GM12878 (cell line): ENCODE measurements at regions of chr4 and their contacts with region 1.

Region 1: GRCh38 chr4:176002007-176002613 is 63.5 kb upstream of the WDR17 start:
- DNase-seq: no peak
- ATAC-seq: peak; percentile 88
- H3K4me3 ChIP-seq: peak overlapping the region; percentile 63; the same call in 1 of the 2 replicates
- H3K27ac ChIP-seq: no peak overlapping the region
- H3K4me1 ChIP-seq: no peaks in the 10 kb centered on the region
- H3K27me3 ChIP-seq: peaks cover 2 to 11% of the 10 kb centered on the region in 2 experiments; a peak in 2 of 4 replicates
- CTCF ChIP-seq: no peak
- EP300 ChIP-seq: no peak
- POLR2A ChIP-seq: no peak
- RAD21 ChIP-seq: no peak

Region 2: DNA sequence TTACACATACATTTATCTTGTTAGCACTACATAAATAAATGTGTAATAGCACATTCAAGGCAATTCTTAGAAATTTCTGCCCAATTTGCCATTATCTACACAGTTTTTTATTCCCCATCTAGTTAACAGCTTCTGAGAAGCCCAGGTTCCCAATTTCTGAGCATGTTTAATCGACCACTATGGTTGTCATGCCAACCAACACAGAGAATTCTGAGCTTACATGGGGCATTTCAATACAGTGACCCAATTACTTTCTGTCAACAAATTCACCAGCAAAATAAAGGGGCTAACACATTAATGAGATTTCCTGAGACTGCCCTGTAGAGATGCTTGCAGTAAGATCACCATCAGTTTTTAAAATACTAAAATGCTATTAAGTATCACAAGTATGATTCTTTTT is 212.0 kb before region 1 on chr4:
- CTCF ChIA-PET with region 1: no interaction called
- POLR2A ChIA-PET with region 1: no interaction called
- RAD21 ChIA-PET with region 1: no interaction called
- SMC1A ChIA-PET with region 1: no interaction called
- in situ Hi-C with region 1: no loop called
- intact Hi-C with region 1: no loop called
- DNase-seq: no peak
- ATAC-seq: no peak
- H3K4me3 ChIP-seq: no peak overlapping the region
- H3K27ac ChIP-seq: no peak overlapping the region
- H3K4me1 ChIP-seq: no peaks in the 10 kb centered on the region
- H3K27me3 ChIP-seq: no peaks in the 10 kb centered on the region
- CTCF ChIP-seq: no peak
- EP300 ChIP-seq: no peak
- POLR2A ChIP-seq: no peak
- RAD21 ChIP-seq: no peak

Region 3: DNA sequence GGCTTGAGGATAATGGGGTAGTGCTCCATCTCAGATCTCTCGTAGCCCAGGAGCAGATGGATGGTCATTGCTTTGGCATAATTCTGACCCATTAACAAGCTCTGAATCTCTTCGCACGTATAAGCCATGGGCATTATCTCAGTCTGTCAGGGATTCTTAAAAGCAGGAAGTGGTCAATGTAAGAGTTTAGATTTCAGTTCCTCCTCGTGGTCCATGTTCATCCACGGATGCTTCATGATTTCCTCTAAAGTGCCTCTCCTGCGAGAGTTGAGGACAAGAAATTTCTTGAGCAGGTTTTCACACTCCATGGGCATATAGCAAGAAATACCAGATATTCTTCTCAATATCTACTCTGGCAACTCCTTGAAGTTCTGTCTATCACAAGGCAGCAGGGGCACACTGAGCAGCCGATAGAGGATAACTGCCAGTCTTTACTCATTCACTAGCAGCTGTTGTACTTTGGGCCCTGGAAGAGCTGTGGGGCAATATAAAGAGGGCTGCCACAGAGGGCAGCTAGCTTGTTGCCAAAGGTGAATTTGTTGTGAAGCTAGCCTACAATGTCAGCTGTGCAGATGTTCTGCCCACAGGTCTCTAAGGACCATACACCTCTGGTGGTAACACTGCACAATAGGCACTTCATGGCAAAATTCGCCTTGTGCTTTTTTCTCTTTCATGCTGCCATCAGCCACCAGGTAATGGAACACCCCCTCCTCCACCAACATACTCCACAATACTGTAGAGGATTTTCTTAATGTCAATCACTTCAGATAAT is 11.6 kb after region 1 on chr4:
- CTCF ChIA-PET with region 1: interaction called, 3 read pairs
- POLR2A ChIA-PET with region 1: no interaction called
- RAD21 ChIA-PET with region 1: interaction called, 3 read pairs
- SMC1A ChIA-PET with region 1: interaction called, 3 read pairs
- in situ Hi-C with region 1: no loop called
- intact Hi-C with region 1: loop called (anchors 1 kb)
- DNase-seq: peak; percentile 42
- ATAC-seq: peak; percentile 84
- H3K4me3 ChIP-seq: no peak overlapping the region
- H3K27ac ChIP-seq: peak overlapping the region; percentile 29
- H3K4me1 ChIP-seq: peaks cover 24% of the 10 kb centered on the region
- H3K27me3 ChIP-seq: peaks cover 0 to 4% of the 10 kb centered on the region in 2 experiments; a peak in 1 of 4 replicates
- CTCF ChIP-seq: no peak
- EP300 ChIP-seq: peak in 1 of 2 experiments; percentile 59; a peak in 1 of 4 replicates
- POLR2A ChIP-seq: no peak
- RAD21 ChIP-seq: no peak